Ascending aorta (tissue), 2 donors: ENCODE measurements at regions of chr12 and their contacts with region 1.

Region 1: GRCh38 chr12:21501379-21501956 is at the starts of genes GOLT1B and RECQL:
- DNase-seq: peak; percentile 87 to 98
- H3K4me3 ChIP-seq: peak within 1 kb of the TSS; percentile 95 to 99
- H3K27ac ChIP-seq: peak within 1 kb of the TSS; percentile 95 to 97
- H3K4me1 ChIP-seq: peaks cover 0 to 25% of the 10 kb centered on the region in 2 donors
- H3K27me3 ChIP-seq: no peaks in the 10 kb centered on the region
- CTCF ChIP-seq: no peak
- total RNA-seq, gene GOLT1B: 9.2 TPM
- total RNA-seq, gene RECQL: 8.7 TPM

Region 2: GRCh38 chr12:21438643-21439042 is 62.8 kb before region 1 on chr12:
- intact Hi-C with region 1: loop called (anchors 5 kb)
- DNase-seq: no peak
- H3K4me3 ChIP-seq: peak overlapping the region; percentile 73 to 80
- H3K27ac ChIP-seq: peak overlapping the region; percentile 84 to 88
- H3K4me1 ChIP-seq: no peaks in the 10 kb centered on the region
- H3K27me3 ChIP-seq: no peaks in the 10 kb centered on the region
- CTCF ChIP-seq: no peak

Region 3: GRCh38 chr12:21657326-21658077 is 156.0 kb after region 1 on chr12 and contains the start of gene LDHB:
- intact Hi-C with region 1: loop called (anchors 1 kb)
- DNase-seq: peak; percentile 91 to 98
- H3K4me3 ChIP-seq: peak within 1 kb of the TSS; percentile 87 to 95
- H3K27ac ChIP-seq: peak within 1 kb of the TSS; percentile 90 to 94
- H3K4me1 ChIP-seq: peaks cover 0 to 2% of the 10 kb centered on the region in 2 donors
- H3K27me3 ChIP-seq: no peaks in the 10 kb centered on the region
- CTCF ChIP-seq: no peak
- total RNA-seq, gene LDHB: 125 TPM

Region 4: GRCh38 chr12:21677622-21678277 is 176.3 kb after region 1 on chr12:
- intact Hi-C with region 1: loop called (anchors 2 kb)
- DNase-seq: no peak
- H3K4me3 ChIP-seq: no peak overlapping the region
- H3K27ac ChIP-seq: no peak overlapping the region
- H3K4me1 ChIP-seq: no peaks in the 10 kb centered on the region
- H3K27me3 ChIP-seq: no peaks in the 10 kb centered on the region
- CTCF ChIP-seq: no peak

Region 5: DNA sequence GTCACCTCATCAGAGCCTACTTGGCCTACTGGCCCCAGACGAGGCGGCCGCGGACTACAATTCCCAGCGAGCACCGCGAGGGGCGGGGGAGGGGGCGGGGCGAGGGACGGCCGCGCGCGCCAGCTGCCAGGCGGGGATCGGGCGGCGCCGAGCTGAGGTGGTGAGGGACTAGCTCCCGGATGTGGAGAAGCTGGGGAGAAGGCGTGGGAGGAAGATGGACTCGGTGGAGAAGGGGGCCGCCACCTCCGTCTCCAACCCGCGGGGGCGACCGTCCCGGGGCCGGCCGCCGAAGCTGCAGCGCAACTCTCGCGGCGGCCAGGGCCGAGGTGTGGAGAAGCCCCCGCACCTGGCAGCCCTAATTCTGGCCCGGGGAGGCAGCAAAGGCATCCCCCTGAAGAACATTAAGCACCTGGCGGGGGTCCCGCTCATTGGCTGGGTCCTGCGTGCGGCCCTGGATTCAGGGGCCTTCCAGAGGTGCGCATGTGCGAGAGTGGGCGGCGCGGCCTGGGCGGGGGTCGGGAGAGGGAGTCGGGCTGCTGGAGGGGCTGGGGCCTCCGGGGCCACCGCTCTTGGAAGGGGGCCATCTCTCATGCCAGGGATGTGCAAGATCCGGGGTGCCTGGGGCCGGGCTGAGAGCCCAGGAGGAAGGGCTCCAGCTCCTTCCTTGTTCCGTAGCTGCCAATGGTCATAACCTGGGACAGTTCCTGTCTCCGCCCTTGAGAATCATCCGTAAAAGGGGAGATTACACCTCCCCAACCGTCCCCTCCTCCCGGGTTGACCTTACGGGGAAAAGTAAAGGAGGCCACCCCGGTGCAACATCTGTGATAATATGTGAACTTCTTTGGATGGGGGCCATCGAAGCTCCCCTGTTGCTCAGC is 544.9 kb after region 1 on chr12 and contains the start of gene CMAS:
- intact Hi-C with region 1: loop called (anchors 1 kb)
- DNase-seq: peak; percentile 16 to 88
- H3K4me3 ChIP-seq: peak within 1 kb of the TSS; percentile 92 to 95
- H3K27ac ChIP-seq: peak within 1 kb of the TSS; percentile 86 to 88
- H3K4me1 ChIP-seq: peaks cover 0 to 4% of the 10 kb centered on the region in 2 donors
- H3K27me3 ChIP-seq: no peaks in the 10 kb centered on the region
- CTCF ChIP-seq: no peak
- total RNA-seq, gene CMAS: 13.7 TPM

Region 6: DNA sequence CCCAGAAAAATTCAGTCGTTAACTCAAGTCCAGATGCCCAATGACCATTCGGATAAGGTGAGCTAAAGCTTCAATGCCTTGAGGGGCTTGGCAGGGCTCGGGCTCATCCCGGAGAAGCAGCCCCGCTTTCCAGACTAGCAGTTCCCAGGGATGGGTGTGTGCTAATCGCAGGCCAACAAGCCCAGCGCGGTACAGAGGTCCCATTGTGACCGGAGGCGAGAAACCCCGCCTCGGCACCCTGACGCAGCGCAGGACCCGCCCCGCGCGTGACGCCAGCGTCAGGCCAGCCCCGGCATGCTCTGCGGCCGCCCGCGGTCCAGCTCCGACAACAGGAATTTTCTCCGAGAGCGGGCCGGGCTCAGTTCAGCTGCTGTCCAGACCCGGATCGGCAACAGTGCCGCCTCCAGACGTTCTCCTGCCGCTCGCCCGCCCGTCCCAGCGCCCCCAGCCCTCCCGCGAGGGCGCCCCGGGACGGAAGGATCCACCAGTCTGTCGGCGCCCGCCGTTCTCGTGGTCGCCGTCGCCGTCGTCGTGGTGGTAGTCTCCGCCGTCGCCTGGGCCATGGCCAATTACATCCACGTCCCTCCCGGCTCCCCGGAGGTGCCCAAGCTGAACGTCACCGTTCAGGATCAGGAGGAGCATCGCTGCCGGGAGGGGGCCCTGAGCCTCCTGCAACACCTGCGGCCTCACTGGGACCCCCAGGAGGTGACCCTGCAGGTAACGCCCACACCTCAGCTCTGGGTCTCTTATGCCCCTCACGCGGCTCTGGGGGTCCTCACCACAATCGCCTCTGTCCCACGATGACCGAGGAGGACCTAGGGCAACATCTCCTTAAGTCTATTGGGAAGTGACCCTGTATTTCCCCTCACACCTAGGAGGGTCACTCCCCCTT is 1123.6 kb after region 1 on chr12 and contains the start of gene ETNK1:
- intact Hi-C with region 1: loop called (anchors 10 kb)
- DNase-seq: peak; percentile 77 to 97
- H3K4me3 ChIP-seq: peak within 1 kb of the TSS; percentile 82 to 92
- H3K27ac ChIP-seq: peak within 1 kb of the TSS; percentile 97 to 98
- H3K4me1 ChIP-seq: peaks cover 0 to 7% of the 10 kb centered on the region in 2 donors
- H3K27me3 ChIP-seq: no peaks in the 10 kb centered on the region
- CTCF ChIP-seq: no peak
- total RNA-seq, gene ETNK1: 13.9 TPM